Endothelial cell of umbilical vein (primary cell): ENCODE measurements at regions of chr2 and their contacts with region 1.

Region 1: DNA sequence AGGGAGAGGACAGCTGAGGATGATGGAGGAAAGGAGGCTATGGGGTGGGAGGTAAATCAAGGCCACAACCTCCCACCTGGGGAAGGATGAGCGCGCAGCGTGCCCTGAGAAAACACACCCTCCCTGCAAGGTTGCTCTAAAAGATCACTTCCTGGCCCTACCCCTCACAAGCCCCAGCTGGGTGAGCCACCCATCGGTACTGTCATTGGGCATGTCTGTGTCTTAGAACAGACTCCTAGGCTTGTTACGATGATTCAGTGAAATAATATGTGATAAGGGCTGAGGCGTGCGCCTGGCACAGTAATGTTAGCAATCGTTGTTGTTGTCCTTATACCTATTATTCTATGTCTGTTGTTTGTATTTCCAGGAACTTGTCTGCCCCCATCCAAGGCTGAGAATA is 175.1 kb downstream of the ZFP36L2 start:
- DNase-seq: peak; percentile 81
- H3K4me3 ChIP-seq: no peak overlapping the region
- H3K27ac ChIP-seq: peak overlapping the region; percentile 14
- H3K4me1 ChIP-seq: peaks cover 32% of the 10 kb centered on the region
- H3K27me3 ChIP-seq: no peaks in the 10 kb centered on the region
- CTCF ChIP-seq: no peak
- POLR2A ChIP-seq: no peak

Region 2: GRCh38 chr2:43114210-43114609 is 62.9 kb after region 1 on chr2:
- CTCF ChIA-PET with region 1: interaction called, 6 read pairs
- POLR2A ChIA-PET with region 1: interaction called, 4 read pairs
- dilution Hi-C with region 1: no loop called
- intact Hi-C with region 1: loop called (anchors 2 kb)
- DNase-seq: peak; percentile 96
- H3K4me3 ChIP-seq: no peak overlapping the region
- H3K27ac ChIP-seq: peak overlapping the region; percentile 49
- H3K4me1 ChIP-seq: peaks cover 25% of the 10 kb centered on the region
- H3K27me3 ChIP-seq: no peaks in the 10 kb centered on the region
- CTCF ChIP-seq: no peak
- POLR2A ChIP-seq: peak; percentile 47